ENCODE measurements at regions of chr21 and their contacts with region 1.

Region 1: DNA sequence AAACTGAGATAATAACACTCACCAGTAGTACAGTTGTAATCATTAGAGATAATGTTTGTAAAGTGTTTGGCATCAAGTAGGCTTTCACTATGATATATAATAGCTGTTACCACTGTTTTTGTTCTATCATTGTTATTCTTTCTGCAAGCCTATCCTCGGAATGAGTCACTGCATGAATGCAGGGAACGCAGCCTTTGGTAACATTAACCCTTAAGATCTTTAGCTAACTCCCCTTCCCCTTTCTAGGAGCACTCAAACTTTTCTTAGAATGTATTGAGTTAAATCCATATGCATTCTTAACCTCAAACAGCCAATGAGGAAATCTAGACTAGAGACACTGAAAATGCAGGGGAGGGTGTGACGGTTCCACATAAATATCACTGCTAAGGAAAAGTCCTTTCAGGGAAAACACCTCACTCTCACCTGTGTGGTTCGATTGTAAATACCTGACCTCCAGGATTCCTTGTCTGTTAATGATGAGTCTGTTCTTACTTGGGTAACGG is 467.3 kb downstream of the SETD4 start:
- H3K4me3 Mint-ChIP-seq: no peak overlapping the region
- H3K27ac Mint-ChIP-seq: no peak overlapping the region
- H3K4me1 Mint-ChIP-seq: no peaks in the 10 kb centered on the region
- H3K27me3 Mint-ChIP-seq: peaks cover 5% of the 10 kb centered on the region

Region 2: DNA sequence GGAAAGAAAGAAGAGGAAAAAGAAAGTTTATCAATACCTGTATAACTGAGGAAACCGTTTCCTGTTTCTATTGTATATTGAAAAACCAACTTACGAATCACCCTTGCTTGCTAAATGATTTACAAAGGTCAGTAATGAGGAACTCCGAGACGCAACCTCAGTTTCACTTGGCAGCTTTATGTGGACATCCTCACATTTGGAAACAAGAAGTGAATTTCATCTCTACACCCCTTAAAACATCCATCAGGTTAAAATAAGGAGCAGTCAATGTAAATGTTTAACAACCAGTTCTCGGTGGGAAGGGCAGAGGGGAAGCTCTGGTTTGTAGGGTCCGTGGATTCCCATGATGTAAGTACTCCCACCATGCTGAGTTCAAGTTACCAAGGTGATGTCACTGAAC is 62.3 kb before region 1 on chr21:
- intact Hi-C with region 1: loop called (anchors 10 kb)
- H3K4me3 Mint-ChIP-seq: no peak overlapping the region
- H3K27ac Mint-ChIP-seq: no peak overlapping the region
- H3K4me1 Mint-ChIP-seq: peaks cover 42% of the 10 kb centered on the region
- H3K27me3 Mint-ChIP-seq: no peaks in the 10 kb centered on the region

Region 3: DNA sequence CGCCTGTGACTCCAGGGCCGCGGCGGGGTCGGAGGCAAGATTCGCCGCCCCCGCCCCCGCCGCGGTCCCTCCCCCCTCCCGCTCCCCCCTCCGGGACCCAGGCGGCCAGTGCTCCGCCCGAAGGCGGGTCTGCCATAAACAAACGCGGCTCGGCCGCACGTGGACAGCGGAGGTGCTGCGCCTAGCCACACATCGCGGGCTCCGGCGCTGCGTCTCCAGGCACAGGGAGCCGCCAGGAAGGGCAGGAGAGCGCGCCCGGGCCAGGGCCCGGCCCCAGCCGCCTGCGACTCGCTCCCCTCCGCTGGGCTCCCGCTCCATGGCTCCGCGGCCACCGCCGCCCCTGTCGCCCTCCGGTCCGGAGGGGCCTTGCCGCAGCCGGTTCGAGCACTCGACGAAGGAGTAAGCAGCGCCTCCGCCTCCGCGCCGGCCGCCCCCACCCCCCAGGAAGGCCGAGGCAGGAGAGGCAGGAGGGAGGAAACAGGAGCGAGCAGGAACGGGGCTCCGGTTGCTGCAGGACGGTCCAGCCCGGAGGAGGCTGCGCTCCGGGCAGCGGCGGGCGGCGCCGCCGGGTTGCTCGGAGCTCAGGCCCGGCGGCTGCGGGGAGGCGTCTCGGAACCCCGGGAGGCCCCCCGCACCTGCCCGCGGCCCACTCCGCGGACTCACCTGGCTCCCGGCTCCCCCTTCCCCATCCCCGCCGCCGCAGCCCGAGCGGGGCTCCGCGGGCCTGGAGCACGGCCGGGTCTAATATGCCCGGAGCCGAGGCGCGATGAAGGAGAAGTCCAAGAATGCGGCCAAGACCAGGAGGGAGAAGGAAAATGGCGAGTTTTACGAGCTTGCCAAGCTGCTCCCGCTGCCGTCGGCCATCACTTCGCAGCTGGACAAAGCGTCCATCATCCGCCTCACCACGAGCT is 1106.2 kb after region 1 on chr21 and contains the start of gene SIM2:
- intact Hi-C with region 1: no loop called
- H3K4me3 Mint-ChIP-seq: no peak within 1 kb of the TSS
- H3K27ac Mint-ChIP-seq: no peak within 1 kb of the TSS
- H3K4me1 Mint-ChIP-seq: peaks cover 8% of the 10 kb centered on the region
- H3K27me3 Mint-ChIP-seq: peaks cover 96% of the 10 kb centered on the region